Cardiac septum (tissue), 1 donor: ENCODE measurements at regions of chr17 and their contacts with region 1.

Region 1: GRCh38 chr17:13601776-13602551 is at the start of gene HS3ST3A1:
- DNase-seq: peak; percentile 75
- total RNA-seq, gene HS3ST3A1: 3.2 TPM

Region 2: GRCh38 chr17:13925579-13925978 is 323.6 kb after region 1 on chr17:
- intact Hi-C with region 1: loop called (anchors 5 kb)
- DNase-seq: no peak

Region 3: GRCh38 chr17:14203388-14203787 is 601.4 kb after region 1 on chr17:
- intact Hi-C with region 1: loop called (anchors 10 kb)
- DNase-seq: no peak